ENCODE measurements at regions of chr1 and their contacts with region 1.

Region 1: GRCh38 chr1:207863893-207864535 is 46.9 kb downstream of the CD34 start:
- DNase-seq: peak; percentile 82
- H3K4me3 Mint-ChIP-seq: peak overlapping the region; percentile 52
- H3K27ac Mint-ChIP-seq: peak overlapping the region; percentile 83
- H3K4me1 Mint-ChIP-seq: peaks cover 63% of the 10 kb centered on the region
- H3K27me3 Mint-ChIP-seq: no peaks in the 10 kb centered on the region

Region 2: GRCh38 chr1:207579436-207579799 is 284.6 kb before region 1 on chr1:
- CTCF ChIA-PET with region 1: no interaction called
- intact Hi-C with region 1: no loop called
- DNase-seq: peak; percentile 62
- H3K4me3 Mint-ChIP-seq: no peak overlapping the region
- H3K27ac Mint-ChIP-seq: no peak overlapping the region
- H3K4me1 Mint-ChIP-seq: no peaks in the 10 kb centered on the region
- H3K27me3 Mint-ChIP-seq: peaks cover 6% of the 10 kb centered on the region

Region 3: GRCh38 chr1:207848234-207848633 is 15.8 kb before region 1 on chr1:
- CTCF ChIA-PET with region 1: interaction called, 5 read pairs
- intact Hi-C with region 1: loop called (anchors 1 kb)
- DNase-seq: peak; percentile 83
- H3K4me3 Mint-ChIP-seq: peak overlapping the region; percentile 22
- H3K27ac Mint-ChIP-seq: peak overlapping the region; percentile 63
- H3K4me1 Mint-ChIP-seq: peaks cover 77% of the 10 kb centered on the region
- H3K27me3 Mint-ChIP-seq: no peaks in the 10 kb centered on the region

Region 4: DNA sequence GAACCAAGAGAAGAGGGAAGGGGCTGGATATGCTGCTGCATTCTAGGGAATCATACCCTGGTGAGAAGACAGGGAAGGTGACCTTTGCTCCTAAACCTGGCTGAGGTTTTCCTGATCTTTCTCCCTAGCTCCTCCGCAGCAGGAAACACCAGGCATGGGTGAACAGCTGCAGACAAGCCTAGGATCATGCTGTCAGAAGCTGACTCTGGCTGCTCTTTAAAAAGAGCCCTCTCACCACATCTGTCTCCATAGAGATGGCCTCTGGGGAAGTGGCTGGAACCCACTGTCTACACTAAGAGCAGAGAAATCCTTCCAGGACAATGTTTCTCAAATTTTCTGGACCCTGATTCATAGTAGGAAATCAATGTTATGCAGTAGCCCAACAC is 10.6 kb before region 1 on chr1:
- CTCF ChIA-PET with region 1: interaction called, 5 read pairs
- intact Hi-C with region 1: loop called (anchors 1 kb)
- DNase-seq: no peak
- H3K4me3 Mint-ChIP-seq: no peak overlapping the region
- H3K27ac Mint-ChIP-seq: no peak overlapping the region
- H3K4me1 Mint-ChIP-seq: peaks cover 74% of the 10 kb centered on the region
- H3K27me3 Mint-ChIP-seq: no peaks in the 10 kb centered on the region

Region 5: DNA sequence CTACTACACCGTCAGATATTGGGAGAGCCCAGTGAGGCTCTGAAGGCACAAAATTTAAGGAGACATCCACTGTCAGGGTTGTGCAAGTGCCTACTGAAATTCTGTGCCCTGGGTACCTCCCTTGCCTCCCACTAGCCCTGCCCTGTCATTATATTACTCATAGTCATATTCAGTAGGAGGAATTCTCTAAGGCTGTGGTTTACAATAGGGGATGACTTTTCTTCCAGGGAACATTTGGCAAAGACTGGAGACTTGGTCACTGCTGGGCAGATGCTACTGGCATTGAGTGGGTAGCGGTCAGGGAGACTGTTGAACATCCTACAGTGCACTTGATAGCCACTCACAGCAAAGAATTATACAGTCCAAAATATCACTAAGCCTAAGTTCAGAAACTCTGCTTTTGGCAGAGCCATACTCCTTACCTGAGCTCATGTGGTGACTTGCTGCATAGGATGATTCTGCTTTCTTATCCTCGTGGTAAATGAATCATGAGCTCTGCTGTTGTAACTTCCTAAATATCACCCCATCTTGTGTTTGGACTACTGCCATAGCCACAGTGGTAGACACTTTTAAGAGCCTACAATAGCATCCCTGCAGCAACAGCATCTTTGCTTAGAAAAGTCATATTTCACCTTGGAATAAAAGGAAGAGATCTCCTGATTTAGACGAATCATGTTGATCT is 943.6 kb after region 1 on chr1:
- CTCF ChIA-PET with region 1: no interaction called
- intact Hi-C with region 1: no loop called
- DNase-seq: no peak
- H3K4me3 Mint-ChIP-seq: no peak overlapping the region
- H3K27ac Mint-ChIP-seq: no peak overlapping the region
- H3K4me1 Mint-ChIP-seq: no peaks in the 10 kb centered on the region
- H3K27me3 Mint-ChIP-seq: peaks cover 3% of the 10 kb centered on the region

Region 6: GRCh38 chr1:209045326-209046057 is 1181.5 kb after region 1 on chr1:
- CTCF ChIA-PET with region 1: no interaction called
- intact Hi-C with region 1: no loop called
- DNase-seq: no peak
- H3K4me3 Mint-ChIP-seq: no peak overlapping the region
- H3K27ac Mint-ChIP-seq: no peak overlapping the region
- H3K4me1 Mint-ChIP-seq: no peaks in the 10 kb centered on the region
- H3K27me3 Mint-ChIP-seq: peaks cover 19% of the 10 kb centered on the region